Caco-2 (cell line): ENCODE measurements at regions of chr5 and their contacts with region 1.

Region 1: DNA sequence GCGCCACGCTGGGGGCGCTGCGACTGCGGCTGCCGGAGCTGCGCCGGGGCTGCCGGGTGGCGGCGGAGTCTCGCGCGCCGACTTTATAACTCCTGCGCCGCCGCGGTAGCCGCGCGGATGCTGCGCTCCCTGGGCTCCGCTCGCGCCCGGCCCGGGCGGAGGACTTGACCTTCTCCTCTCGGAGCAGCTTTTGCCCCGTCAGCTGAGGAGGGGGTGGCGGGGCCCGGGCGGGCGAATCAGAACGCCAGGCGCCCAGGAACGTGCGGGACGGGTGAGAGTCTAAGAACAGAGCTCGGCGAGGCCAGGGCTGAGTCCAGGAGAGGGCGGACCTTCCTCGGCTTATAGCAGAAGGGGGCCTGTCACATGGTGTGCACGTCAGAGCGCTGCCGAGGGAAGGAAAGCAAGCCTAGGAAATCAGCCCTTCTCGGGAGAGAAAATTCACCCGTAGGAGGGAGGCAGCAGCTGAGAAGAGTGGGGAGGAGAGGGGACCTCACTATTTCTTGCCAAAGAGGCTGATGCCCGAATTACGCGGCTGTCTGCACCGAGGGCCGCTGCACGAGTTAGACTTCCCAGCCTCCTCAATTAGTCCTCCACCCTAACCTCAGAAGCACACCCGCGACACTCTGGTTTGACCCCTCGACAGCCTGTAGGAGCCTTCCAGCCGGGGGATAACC is at the start of gene FOXD1:
- DNase-seq: peak; percentile 78 to 82
- H3K4me3 ChIP-seq: peak within 1 kb of the TSS; percentile 68
- H3K4me3 Mint-ChIP-seq: peak within 1 kb of the TSS; percentile 81
- H3K27ac Mint-ChIP-seq: peak within 1 kb of the TSS; percentile 32
- H3K4me1 ChIP-seq: peaks cover 11% of the 10 kb centered on the region
- H3K4me1 Mint-ChIP-seq: no peaks in the 10 kb centered on the region
- H3K27me3 ChIP-seq: peaks cover 5% of the 10 kb centered on the region
- H3K27me3 Mint-ChIP-seq: peaks cover 25% of the 10 kb centered on the region
- CTCF ChIP-seq: no peak
- total RNA-seq, gene FOXD1: 2.8 and 3.1 TPM in 2 replicates

Region 2: GRCh38 chr5:73088026-73088425 is 360.6 kb before region 1 on chr5:
- CTCF ChIA-PET with region 1: no interaction called
- POLR2A ChIA-PET with region 1: no interaction called
- intact Hi-C with region 1: loop called (anchors 1 kb)
- DNase-seq: no peak
- H3K4me3 ChIP-seq: no peak overlapping the region
- H3K4me3 Mint-ChIP-seq: no peak overlapping the region
- H3K27ac Mint-ChIP-seq: no peak overlapping the region
- H3K4me1 ChIP-seq: no peaks in the 10 kb centered on the region
- H3K4me1 Mint-ChIP-seq: no peaks in the 10 kb centered on the region
- H3K27me3 ChIP-seq: no peaks in the 10 kb centered on the region
- H3K27me3 Mint-ChIP-seq: no peaks in the 10 kb centered on the region
- CTCF ChIP-seq: no peak

Region 3: DNA sequence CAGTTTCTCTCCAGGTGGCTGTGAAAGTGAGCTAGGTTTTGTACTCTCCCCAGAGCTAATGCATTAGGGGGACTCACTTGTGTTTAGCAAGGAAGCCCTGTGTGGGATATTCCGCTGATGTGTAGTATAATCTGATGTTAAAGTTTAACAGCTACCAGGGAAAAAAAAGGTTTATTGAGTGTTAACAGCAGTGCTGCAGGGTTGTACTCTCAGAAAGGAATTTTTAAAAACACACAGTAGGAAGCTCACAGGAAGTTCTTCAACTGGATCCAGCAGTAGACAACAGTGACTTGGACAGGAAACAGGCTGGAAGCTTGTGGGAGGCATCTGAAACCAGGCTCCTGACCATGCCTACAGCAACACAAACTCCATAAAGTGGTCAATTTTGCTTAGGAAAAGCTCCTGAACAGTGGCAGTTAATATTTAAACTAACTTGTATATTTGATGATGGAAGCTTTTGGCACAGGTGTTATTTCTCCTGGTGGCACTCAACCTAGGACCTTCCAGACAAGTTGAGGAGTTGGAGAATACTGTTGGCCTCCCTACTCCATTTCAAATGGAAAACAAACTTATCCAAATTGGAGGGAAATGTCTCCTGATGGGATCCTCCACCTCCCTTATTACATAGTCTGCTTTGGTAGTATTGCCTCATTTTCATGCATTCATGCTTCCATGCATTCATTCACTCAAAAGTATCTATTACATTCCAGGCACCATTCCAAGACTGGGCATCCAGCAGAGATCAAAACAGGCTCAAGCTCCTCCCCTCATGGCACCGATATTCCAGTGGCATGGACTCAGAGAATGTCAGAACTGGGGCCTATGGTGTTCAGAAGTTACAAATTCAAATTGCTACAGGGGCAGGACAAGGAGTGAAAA is 54.8 kb before region 1 on chr5:
- CTCF ChIA-PET with region 1: interaction called, 21 read pairs
- POLR2A ChIA-PET with region 1: no interaction called
- intact Hi-C with region 1: loop called (anchors 2 kb)
- DNase-seq: peak in 1 of 2 experiments; percentile 16
- H3K4me3 ChIP-seq: no peak overlapping the region
- H3K4me3 Mint-ChIP-seq: no peak overlapping the region
- H3K27ac Mint-ChIP-seq: peak overlapping the region; percentile 43
- H3K4me1 ChIP-seq: peaks cover 40% of the 10 kb centered on the region
- H3K4me1 Mint-ChIP-seq: peaks cover 34% of the 10 kb centered on the region
- H3K27me3 ChIP-seq: no peaks in the 10 kb centered on the region
- H3K27me3 Mint-ChIP-seq: no peaks in the 10 kb centered on the region
- CTCF ChIP-seq: no peak